PC-3 (cell line): ENCODE measurements at regions of chr1 and their contacts with region 1.

Region 1: DNA sequence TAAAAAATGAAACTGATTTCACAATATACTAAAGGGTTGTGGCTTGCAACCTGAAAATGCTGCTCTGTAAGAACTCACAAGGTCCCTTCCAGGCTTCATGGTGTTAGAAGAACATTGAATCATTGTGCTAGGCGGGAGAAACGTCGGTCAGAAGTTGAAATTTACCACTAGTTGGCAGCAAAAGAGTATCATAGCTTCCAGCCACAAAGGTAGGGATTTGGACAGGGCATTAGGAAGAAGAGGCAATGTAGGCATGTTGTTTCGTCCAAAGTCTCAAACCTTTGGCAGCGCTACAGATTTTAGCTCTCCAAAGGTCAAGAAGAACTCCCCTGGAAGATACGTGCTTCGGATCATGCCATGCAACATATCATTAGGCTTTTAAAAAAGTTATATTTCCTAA is 62.5 kb upstream of the ZP4 start:
- DNase-seq: peak; percentile 49
- ATAC-seq: no peak
- H3K4me3 ChIP-seq: no peak overlapping the region
- H3K27ac ChIP-seq: no peak overlapping the region
- H3K4me1 ChIP-seq: no peaks in the 10 kb centered on the region
- H3K27me3 ChIP-seq: no peaks in the 10 kb centered on the region
- CTCF ChIP-seq: peak; percentile 57

Region 2: GRCh38 chr1:237249120-237249519 is 704.1 kb before region 1 on chr1:
- CTCF ChIA-PET with region 1: no interaction called
- POLR2A ChIA-PET with region 1: no interaction called
- intact Hi-C with region 1: no loop called
- DNase-seq: no peak
- ATAC-seq: no peak
- H3K4me3 ChIP-seq: no peak overlapping the region
- H3K27ac ChIP-seq: no peak overlapping the region
- H3K4me1 ChIP-seq: no peaks in the 10 kb centered on the region
- H3K27me3 ChIP-seq: no peaks in the 10 kb centered on the region
- CTCF ChIP-seq: no peak

Region 3: DNA sequence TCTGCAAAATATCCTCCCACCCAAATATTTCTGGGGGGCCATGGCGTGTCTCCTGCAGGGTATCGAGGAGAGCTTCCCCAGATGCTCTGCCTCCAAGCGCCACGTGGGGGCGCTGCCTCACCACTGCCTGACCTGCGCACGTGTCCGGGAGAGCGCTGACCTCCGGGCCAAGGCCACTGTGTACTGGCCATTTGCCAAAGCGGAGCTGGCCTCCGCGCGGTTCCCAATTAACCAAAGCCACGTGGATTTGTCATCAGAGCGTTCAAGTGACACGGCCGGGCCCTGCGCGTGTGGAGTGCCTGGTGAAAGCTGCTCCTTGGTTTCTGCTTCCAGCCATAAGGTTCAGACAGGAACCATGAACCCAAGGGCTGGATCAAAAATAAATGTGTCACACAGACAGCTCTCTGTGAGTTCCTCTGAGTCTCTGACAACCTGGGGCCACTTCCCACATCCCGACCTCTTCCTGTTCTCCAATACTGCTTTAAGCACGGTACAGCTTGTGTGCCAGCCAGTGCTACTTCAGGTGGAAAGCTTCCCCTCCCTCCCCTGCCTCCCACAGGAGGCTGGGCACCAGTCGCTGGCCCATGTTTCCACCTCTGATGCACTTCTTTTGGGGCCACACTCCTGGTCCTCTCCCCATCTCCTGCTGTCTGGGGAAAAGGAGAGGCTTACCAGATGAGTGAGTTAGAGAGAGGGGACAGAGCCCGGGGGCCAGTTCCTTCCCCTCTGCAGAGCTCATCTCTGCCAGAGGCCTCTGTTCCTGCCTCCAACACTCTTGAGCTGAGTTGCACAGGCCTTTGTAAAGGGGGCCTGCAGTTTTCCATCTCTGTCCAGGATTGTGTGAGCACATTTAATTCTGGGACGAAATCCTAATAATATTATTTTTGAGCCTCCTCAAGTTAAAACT is 88.6 kb before region 1 on chr1:
- CTCF ChIA-PET with region 1: no interaction called
- POLR2A ChIA-PET with region 1: no interaction called
- intact Hi-C with region 1: no loop called
- DNase-seq: peak; percentile 55
- ATAC-seq: peak; percentile 89
- H3K4me3 ChIP-seq: peak overlapping the region; percentile 50; the same call in 1 of the 2 replicates
- H3K27ac ChIP-seq: no peak overlapping the region
- H3K4me1 ChIP-seq: 0 out of 2 replicates have a peak, but pooled peaks cover 3% of the 10 kb centered on the region
- H3K27me3 ChIP-seq: no peaks in the 10 kb centered on the region
- CTCF ChIP-seq: peak; percentile 92

Region 4: DNA sequence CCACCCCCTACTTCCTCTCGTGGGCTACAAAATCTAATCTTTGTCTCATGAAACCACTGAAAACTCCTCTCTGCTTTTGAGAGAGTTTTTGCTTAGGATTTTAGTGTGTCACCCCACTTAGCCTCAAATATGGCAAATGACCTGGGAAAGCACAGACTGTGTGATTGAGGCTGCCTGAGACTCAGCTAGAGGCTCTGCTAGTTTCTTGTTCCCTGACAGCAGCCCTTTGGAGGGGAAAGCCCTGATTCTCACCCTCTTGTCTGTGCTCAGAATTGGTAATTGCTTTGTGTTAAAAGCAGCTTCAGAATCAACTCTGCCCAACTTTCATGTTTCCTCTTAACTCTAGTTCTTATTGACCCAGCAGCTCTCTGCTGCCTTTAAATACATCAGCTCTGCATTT is 23.1 kb after region 1 on chr1:
- CTCF ChIA-PET with region 1: no interaction called
- POLR2A ChIA-PET with region 1: no interaction called
- intact Hi-C with region 1: no loop called
- DNase-seq: no peak
- ATAC-seq: no peak
- H3K4me3 ChIP-seq: no peak overlapping the region
- H3K27ac ChIP-seq: no peak overlapping the region
- H3K4me1 ChIP-seq: no peaks in the 10 kb centered on the region
- H3K27me3 ChIP-seq: no peaks in the 10 kb centered on the region
- CTCF ChIP-seq: no peak

Region 5: GRCh38 chr1:238119060-238119459 is 165.8 kb after region 1 on chr1:
- CTCF ChIA-PET with region 1: no interaction called
- POLR2A ChIA-PET with region 1: no interaction called
- intact Hi-C with region 1: no loop called
- DNase-seq: no peak
- ATAC-seq: no peak
- H3K4me3 ChIP-seq: no peak overlapping the region
- H3K27ac ChIP-seq: no peak overlapping the region
- H3K4me1 ChIP-seq: no peaks in the 10 kb centered on the region
- H3K27me3 ChIP-seq: no peaks in the 10 kb centered on the region
- CTCF ChIP-seq: 0 out of 2 replicates have a peak, but pooled peaks have one; percentile 17

Region 6: DNA sequence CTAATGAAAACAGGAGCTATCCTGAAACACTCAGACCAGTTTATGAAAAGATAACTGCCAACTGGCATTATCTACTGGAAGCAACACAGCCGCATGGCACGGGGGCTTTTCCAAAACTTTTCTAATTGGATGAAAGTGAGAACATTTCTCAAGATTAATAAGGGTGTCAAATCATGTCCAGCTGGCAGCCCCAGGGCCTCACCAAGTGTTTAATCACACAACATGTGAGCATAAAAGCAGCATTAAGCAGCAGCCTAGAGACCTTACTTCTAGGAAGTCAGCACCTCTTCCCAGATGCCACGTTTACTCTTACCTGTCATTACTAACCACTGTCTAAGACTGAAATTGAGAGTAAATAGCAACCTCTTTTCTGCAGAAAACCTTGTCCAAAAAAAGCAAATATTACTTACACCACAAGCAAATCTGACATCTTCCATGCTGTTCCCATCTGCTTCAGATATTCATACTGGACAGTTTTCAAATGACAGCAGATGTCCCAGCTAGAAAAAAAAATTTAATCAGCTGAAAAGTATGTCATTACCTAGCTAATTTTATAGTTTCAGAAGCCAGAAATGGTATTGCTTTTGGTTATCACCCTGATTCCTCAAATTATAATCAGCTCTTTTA is 279.0 kb after region 1 on chr1:
- CTCF ChIA-PET with region 1: no interaction called
- POLR2A ChIA-PET with region 1: no interaction called
- intact Hi-C with region 1: loop called (anchors 10 kb)
- DNase-seq: no peak
- ATAC-seq: no peak
- H3K4me3 ChIP-seq: no peak overlapping the region
- H3K27ac ChIP-seq: no peak overlapping the region
- H3K4me1 ChIP-seq: no peaks in the 10 kb centered on the region
- H3K27me3 ChIP-seq: no peaks in the 10 kb centered on the region
- CTCF ChIP-seq: no peak

Region 7: DNA sequence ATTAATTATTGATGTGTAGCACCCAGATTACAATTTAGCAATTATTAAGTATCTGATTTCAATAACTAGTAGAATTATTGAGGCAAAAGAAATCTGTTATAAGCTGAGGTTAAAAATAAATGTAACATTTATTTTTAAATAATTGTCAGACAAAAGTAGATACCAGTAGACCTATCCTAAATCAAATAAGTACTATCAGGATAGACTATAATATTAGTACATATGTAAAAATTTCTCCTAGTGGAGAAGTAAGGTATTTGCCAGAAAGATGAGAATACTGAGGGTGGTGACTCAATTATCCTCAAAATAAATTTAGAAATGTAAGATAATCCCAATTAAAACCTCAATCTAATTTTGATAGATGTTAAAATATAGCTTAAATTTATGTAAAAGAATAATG is 1055.3 kb after region 1 on chr1:
- CTCF ChIA-PET with region 1: no interaction called
- POLR2A ChIA-PET with region 1: interaction called, 34 read pairs
- intact Hi-C with region 1: no loop called
- DNase-seq: peak; percentile 13
- ATAC-seq: no peak
- H3K4me3 ChIP-seq: no peak overlapping the region
- H3K27ac ChIP-seq: no peak overlapping the region
- H3K4me1 ChIP-seq: no peaks in the 10 kb centered on the region
- H3K27me3 ChIP-seq: no peaks in the 10 kb centered on the region
- CTCF ChIP-seq: peak; percentile 50